ENCODE measurements at regions of chr19 and their contacts with region 1.

Region 1: GRCh38 chr19:10230861-10231611 is at the start of gene S1PR2:
- DNase-seq: peak; percentile 38 to 86 (median 69)
- ATAC-seq: peak; percentile 50 to 68 (median 66)
- H3K4me3 ChIP-seq: peak within 1 kb of the TSS; percentile 75 to 95
- H3K4me3 Mint-ChIP-seq: peak within 1 kb of the TSS; percentile 82 to 89 (median 88)
- H3K27ac ChIP-seq: peak within 1 kb of the TSS; percentile 90
- H3K27ac Mint-ChIP-seq: peak within 1 kb of the TSS; percentile 78 to 79
- H3K4me1 ChIP-seq: peaks cover 10 to 58% of the 10 kb centered on the region in 2 experiments
- H3K4me1 Mint-ChIP-seq: peaks cover 23 to 30% (median 25%) of the 10 kb centered on the region in 3 donors
- H3K27me3 ChIP-seq: no peaks in the 10 kb centered on the region
- H3K27me3 Mint-ChIP-seq: no peaks in the 10 kb centered on the region
- total RNA-seq, gene S1PR2: 6.2 to 11.4 (median 9.8) TPM

Region 2: DNA sequence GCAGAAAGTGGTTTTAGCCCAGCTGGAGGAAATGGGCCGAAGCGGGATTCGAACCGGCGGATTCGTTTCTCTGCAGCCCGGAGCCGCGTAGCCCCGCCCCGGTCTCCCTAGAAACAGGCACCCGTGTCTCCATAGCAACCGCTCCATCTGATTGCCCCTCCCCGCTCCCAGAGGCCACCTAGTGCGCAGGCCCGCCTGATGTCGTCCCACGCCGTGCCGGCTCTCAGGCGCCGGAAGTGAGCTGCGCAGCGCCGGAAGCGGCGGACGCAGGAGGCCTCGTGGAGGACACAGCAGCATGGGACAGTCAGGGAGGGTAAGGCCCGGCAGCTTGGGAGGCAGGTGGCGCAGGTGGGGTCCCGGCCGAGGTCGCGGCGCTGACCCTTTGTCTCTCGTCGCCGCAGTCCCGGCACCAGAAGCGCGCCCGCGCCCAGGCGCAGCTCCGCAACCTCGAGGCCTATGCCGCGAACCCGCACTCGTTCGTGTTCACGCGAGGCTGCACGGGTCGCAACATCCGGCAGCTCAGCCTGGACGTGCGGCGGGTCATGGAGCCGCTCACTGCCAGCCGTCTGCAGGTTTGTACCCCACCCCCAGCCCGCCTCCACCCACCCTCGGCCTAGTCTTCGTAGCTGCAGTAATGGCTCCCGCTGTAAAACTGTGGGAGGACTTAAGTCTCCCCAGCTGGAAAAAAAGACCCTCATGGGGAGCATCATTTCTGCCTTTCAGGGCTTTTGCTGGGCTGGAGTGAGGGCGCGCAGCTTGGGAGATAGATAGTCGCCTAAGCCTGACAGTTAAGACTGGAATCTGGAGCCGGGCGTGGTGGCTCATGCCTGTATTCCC is 124.7 kb before region 1 on chr19 and contains the start of gene PPAN:
- CTCF ChIA-PET with region 1: interaction called in 1 of 2 experiments, 3 read pairs
- POLR2A ChIA-PET with region 1: interaction called in 1 of 2 experiments, 10 read pairs
- DNase-seq: peak; percentile 91 to 100 (median 97)
- ATAC-seq: peak; percentile 71 to 79 (median 75)
- H3K4me3 ChIP-seq: peak within 1 kb of the TSS; percentile 62 to 73
- H3K4me3 Mint-ChIP-seq: peak within 1 kb of the TSS; percentile 80 to 91 (median 89)
- H3K27ac ChIP-seq: peak within 1 kb of the TSS; percentile 97
- H3K27ac Mint-ChIP-seq: peak within 1 kb of the TSS; percentile 94 to 96
- H3K4me1 ChIP-seq: peaks cover 32 to 92% of the 10 kb centered on the region in 2 experiments
- H3K4me1 Mint-ChIP-seq: peaks cover 60 to 61% (median 60%) of the 10 kb centered on the region in 3 donors
- H3K27me3 ChIP-seq: no peaks in the 10 kb centered on the region
- H3K27me3 Mint-ChIP-seq: no peaks in the 10 kb centered on the region
- total RNA-seq, gene PPAN: 89.3 to 140 (median 123) TPM

Region 3: GRCh38 chr19:10126213-10126639 is 104.8 kb before region 1 on chr19:
- CTCF ChIA-PET with region 1: no interaction called
- POLR2A ChIA-PET with region 1: no interaction called
- DNase-seq: no peak
- ATAC-seq: no peak
- H3K4me3 ChIP-seq: no peak overlapping the region
- H3K4me3 Mint-ChIP-seq: no peak overlapping the region
- H3K27ac ChIP-seq: no peak overlapping the region
- H3K27ac Mint-ChIP-seq: no peak overlapping the region
- H3K4me1 ChIP-seq: no peaks in the 10 kb centered on the region
- H3K4me1 Mint-ChIP-seq: no peaks in the 10 kb centered on the region
- H3K27me3 ChIP-seq: no peaks in the 10 kb centered on the region
- H3K27me3 Mint-ChIP-seq: no peaks in the 10 kb centered on the region

Region 4: DNA sequence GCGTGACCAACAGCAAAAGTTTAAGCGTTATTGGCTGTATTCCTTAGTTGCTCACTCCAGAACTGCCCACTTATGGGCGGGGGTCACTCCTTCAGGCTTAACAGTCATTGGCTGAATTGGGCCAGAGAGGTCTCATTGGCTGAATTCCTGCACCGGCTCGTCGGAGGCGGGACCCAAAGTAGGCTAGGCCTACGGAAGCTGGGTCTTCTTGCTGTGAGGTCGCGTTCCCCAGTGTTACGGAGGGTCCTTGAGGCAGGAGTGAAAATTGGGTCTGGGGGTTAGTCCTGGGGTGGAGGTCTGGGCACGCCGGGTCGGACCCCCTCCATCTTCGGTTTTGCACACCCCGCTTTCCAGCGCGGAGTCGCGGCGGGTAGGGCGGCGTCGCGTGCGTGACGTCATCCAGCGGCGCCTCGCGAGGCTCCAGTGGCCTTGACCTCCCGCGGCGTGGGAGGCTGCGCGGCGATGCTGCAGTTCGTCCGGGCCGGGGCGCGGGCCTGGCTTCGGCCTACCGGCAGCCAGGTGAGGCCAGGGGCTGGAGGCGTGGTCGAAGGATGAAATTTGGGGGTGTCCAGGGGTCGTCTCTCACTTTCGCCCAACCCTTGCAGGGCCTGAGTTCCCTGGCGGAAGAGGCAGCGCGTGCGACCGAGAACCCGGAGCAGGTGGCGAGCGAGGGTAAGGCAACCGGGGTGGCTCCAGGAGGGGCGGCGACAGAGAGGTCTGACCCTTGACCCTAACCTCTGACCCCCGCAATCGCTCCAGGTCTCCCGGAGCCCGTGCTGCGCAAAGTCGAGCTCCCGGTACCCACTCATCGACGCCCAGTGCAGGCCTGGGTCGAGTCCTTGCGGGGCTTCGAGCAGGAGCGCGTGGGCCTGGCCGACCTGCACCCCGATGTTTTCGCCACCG is 21.0 kb after region 1 on chr19 and contains the start of gene MRPL4:
- CTCF ChIA-PET with region 1: interaction called, 12 to 16 read pairs
- POLR2A ChIA-PET with region 1: interaction called in 1 of 2 experiments, 9 read pairs
- DNase-seq: peak; percentile 88 to 98 (median 96)
- ATAC-seq: peak; percentile 96 to 98 (median 98)
- H3K4me3 ChIP-seq: peak within 1 kb of the TSS; percentile 91 to 99
- H3K4me3 Mint-ChIP-seq: peak within 1 kb of the TSS; percentile 94 to 99 (median 96)
- H3K27ac ChIP-seq: peak within 1 kb of the TSS; percentile 60
- H3K27ac Mint-ChIP-seq: peak within 1 kb of the TSS; percentile 93 to 96
- H3K4me1 ChIP-seq: peaks cover 6 to 23% of the 10 kb centered on the region in 2 experiments
- H3K4me1 Mint-ChIP-seq: peaks cover 24 to 29% (median 26%) of the 10 kb centered on the region in 3 donors
- H3K27me3 ChIP-seq: peaks cover 0 to 2% of the 10 kb centered on the region in 2 experiments
- H3K27me3 Mint-ChIP-seq: no peaks in the 10 kb centered on the region
- total RNA-seq, gene MRPL4: 32.9 to 56.6 (median 53.1) TPM